HEK293T (cell line): ENCODE measurements at regions of chr11 and their contacts with region 1.

Region 1: GRCh38 chr11:63635762-63636465 is 21.7 kb upstream of the PLAAT3 start:
- DNase-seq: peak; percentile 66

Region 2: DNA sequence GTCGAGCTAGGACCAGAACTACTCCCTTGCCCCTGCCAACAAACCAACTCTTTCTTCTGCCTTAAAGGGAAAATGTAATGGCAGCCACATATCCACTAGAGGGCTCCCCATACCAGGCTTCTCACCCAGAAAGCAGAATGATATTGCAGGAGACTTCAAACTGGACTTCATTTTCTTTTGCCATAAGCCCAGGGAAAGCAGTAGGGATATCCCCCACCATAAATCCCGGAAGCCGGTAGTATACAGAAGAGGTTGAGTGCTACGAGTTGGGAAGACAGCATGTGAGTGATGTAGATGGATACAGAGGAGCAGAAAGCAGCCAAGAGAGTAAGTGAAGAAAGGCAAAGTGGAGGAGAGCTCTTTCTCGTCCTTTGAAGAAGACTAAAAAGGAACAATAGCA is 157.0 kb before region 1 on chr11:
- CTCF ChIA-PET with region 1: interaction called, 12 read pairs
- POLR2A ChIA-PET with region 1: no interaction called
- DNase-seq: peak; percentile 74

Region 3: DNA sequence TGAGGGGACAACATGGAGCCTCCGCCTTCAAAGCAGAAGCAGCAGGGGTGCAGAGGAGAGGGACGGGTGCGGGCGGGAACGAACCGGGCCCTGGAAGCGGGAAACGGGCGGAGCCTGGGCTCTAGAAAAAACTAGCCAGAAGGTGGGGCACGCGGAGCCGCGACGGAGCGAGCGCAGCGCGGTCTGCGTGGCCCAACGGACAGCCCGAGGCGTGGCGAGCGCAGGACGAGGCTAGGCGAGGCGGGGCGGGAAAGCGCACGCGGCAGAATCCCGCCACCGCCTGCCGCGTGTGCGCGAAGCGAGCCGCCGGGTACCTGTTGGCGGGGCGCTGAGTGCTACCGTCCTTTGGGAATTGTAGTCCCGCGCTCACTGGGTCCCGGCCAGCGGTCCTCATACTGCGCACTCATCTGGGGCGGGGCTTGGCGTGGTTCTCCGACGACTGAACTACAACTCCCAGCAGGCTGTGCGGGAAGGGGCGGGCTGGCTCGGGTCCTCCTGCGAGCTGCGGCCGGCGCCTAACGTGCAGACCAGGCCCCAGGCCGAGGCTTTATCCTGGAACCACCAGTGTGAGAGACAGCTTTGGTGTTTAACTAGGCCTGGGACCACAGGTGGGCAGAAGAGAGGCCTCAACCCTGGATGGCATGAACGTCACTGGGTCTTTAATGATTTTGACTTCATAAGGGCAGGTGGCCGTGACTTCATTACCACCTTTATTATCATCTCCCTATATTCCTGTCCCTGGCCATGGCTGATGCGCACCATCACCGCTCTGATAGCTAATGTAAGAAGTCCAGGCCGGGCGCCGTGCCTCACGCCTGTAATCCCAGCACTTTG is 35.6 kb after region 1 on chr11 and contains the start of gene ATL3:
- CTCF ChIA-PET with region 1: no interaction called
- POLR2A ChIA-PET with region 1: no interaction called
- DNase-seq: peak; percentile 95